Posterior cingulate gyrus (tissue), 11 donors: ENCODE measurements at regions of chr19 and their contacts with region 1.

Region 1: DNA sequence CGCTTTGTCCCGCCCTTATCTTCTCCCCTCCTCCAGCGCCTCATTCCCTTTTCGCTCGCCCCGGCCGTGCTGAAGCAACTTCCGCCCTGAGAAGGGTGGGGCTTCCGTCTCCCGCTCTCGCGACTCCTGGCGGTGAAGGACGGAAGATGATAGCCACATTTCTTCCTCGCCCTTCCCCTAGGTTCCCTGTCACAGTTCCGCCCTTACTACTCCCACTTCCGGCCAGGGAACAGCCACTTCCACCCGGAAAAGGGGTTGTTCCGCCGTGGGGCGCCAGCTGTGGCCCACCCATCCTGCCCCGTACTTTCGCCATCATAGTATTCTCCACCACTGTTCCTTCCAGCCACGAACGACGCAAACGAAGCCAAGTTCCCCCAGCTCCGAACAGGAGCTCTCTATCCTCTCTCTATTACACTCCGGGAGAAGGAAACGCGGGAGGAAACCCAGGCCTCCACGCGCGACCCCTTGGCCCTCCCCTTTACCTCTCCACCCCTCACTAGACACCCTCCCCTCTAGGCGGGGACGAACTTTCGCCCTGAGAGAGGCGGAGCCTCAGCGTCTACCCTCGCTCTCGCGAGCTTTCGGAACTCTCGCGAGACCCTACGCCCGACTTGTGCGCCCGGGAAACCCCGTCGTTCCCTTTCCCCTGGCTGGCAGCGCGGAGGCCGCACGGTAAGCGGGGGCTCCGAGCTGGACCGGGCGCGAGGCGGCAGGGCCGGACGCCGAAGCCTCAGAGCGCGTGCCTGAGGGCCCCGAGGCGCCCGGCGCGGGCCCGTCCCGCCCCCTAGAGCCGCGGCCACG is at the start of gene RPS19:
- DNase-seq: peak; percentile 97 to 100 (median 99)

Region 2: GRCh38 chr19:41657157-41657556 is 202.7 kb before region 1 on chr19:
- intact Hi-C with region 1: no loop called
- DNase-seq: no peak

Region 3: GRCh38 chr19:41883821-41884733 is 24.3 kb after region 1 on chr19:
- intact Hi-C with region 1: loop called (anchors 1 kb)
- DNase-seq: peak; percentile 90 to 100 (median 96)

Region 4: DNA sequence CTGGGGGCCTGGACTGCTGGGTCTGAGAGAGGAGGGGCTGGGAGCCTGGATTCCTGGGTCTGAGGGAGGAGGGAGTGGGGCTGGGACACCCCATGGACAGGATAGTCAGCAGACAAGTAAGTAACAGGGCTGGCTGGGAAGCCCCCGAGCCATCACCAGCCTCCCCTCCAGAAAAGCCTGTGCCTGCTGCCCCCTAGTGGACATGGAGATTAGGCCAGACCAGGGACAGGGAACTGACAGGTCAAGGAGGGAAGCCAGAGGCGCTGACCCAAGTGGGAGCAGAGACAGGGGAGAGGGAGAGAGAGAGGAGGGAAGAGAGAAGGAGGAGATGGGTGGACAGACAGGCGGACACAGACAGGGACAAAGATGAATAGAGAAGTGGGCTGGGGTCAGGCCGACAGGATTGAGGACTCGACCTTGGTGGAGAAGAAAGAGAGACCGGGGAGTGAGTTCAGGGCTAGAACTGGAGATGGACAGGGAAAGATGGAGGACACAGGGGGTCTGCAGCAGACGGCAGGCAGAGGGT is 75.1 kb after region 1 on chr19:
- intact Hi-C with region 1: loop called (anchors 5 kb)
- DNase-seq: peak in 8 of 10 donors; percentile 28 to 94 (median 66)

Region 5: GRCh38 chr19:41959056-41960053 is 99.5 kb after region 1 on chr19 and contains the start of gene RABAC1:
- intact Hi-C with region 1: loop called (anchors 2 kb)
- DNase-seq: peak; percentile 89 to 99 (median 93)